Esophagus muscularis mucosa (tissue), 4 donors: ENCODE measurements at regions of chr11 and their contacts with region 1.

Region 1: DNA sequence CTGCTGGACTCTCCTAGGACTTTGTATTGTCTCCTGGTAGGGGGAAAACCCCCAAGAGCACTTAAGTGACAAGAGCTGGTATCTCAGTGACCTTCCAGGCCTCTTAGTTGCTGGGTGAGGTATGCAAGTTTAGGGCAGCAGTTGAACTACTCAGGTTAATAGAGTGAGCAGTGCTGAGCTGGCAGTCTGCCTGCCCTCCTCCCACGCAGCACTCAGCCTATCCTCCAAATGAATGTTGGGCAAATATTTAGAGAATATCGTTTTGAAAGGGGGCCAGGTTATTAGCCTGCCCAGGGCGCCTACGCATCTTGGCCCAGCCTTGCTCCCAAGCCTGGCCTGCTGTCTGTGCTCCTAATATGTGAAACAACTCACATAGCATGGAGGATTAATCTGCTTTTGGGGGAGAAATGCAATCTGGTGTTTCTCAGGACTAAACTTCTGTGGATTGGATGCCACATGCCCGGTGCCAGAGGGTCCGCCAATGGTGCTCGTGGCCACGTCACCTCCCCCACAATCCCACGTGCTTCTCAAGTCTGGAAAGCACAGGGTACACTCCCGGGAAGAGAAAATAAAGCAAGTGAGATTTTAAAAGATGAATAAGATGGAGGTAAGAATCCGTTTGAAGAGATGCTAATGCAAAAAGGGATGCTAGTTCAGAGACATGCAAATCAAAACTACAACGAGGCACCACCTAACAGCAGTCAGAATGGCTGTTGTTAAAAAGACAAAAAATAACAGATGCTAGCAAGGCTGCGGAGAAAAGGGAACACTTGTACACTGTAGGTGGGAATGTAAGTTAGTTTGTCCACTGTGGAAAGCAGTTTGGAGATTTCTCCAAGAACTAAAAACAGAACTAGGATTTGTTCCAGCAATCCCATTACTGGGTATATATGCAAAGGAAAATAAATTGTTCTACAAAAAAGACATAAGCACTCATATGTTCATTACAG is 67.7 kb downstream of the SPON1 start:
- DNase-seq: peak; percentile 17
- H3K4me3 ChIP-seq: peak overlapping the region in 1 of 4 donors; percentile 20
- H3K27ac ChIP-seq: peak overlapping the region; percentile 72 to 74 (median 74)
- H3K4me1 ChIP-seq: peaks cover 16 to 58% (median 48%) of the 10 kb centered on the region in 4 donors
- H3K27me3 ChIP-seq: no peaks in the 10 kb centered on the region
- CTCF ChIP-seq: no peak
- EP300 ChIP-seq: no peak
- POLR2A ChIP-seq: no peak

Region 2: GRCh38 chr11:13965337-13965736 is 64.9 kb before region 1 on chr11:
- intact Hi-C with region 1: loop called (anchors 5 kb)
- DNase-seq: no peak
- H3K4me3 ChIP-seq: no peak overlapping the region
- H3K27ac ChIP-seq: no peak overlapping the region
- H3K4me1 ChIP-seq: peaks cover 18 to 40% (median 35%) of the 10 kb centered on the region in 4 donors
- H3K27me3 ChIP-seq: peaks cover 0 to 49% (median 12%) of the 10 kb centered on the region in 4 donors
- CTCF ChIP-seq: no peak
- EP300 ChIP-seq: no peak
- POLR2A ChIP-seq: no peak

Region 3: GRCh38 chr11:13983081-13983751 is 47.0 kb before region 1 on chr11:
- intact Hi-C with region 1: loop called (anchors 5 kb)
- DNase-seq: peak; percentile 92
- H3K4me3 ChIP-seq: no peak overlapping the region
- H3K27ac ChIP-seq: peak overlapping the region; percentile 76 to 80 (median 78)
- H3K4me1 ChIP-seq: peaks cover 0 to 48% (median 40%) of the 10 kb centered on the region in 4 donors
- H3K27me3 ChIP-seq: no peaks in the 10 kb centered on the region
- CTCF ChIP-seq: no peak
- EP300 ChIP-seq: no peak
- POLR2A ChIP-seq: no peak